AG04450 (cell line): ENCODE measurements at regions of chr14 and their contacts with region 1.

Region 1: DNA sequence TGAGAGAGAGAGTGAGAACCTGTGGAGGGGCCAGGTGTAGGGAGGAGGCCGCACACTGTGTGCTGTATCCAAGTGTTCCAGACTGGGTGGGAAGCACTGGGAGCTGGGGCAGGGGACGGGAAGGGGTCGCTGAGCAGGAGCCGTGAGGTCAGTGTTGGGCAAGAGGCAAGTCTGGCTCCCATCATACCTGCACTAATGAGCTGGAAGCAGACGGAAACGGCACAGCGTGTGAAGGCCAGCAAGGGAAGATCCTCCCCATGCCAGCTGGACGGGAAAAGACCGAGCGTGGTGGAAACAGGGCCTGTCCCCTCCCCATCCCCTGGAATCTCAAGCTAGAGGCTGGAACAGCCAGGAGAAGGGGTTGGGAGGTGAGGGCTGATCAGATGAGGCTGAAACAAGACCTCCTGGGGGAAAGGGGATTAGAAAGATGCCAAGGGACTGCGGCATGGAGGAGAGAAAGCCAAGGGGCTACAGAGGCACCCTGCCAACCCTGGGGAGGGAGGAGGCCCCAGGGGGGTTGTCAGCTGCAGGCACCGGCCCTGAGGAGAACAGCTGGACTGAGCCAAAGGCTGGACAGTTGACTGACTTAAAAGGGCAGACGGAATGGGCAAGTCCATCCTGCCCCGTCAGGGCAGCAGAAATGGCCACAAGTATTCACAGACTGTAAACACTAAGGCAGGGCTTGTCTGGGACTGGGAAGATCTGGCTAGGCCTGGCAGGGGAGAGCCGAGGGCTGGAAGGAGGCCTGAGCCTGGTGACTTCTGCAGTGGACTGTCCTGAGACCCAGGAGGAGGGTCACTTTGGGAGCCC is 19.0 kb upstream of the LTBP2 start:
- DNase-seq: no peak
- H3K4me3 ChIP-seq: no peak overlapping the region
- H3K27ac ChIP-seq: peak overlapping the region; percentile 21
- H3K27me3 ChIP-seq: no peaks in the 10 kb centered on the region
- CTCF ChIP-seq: no peak

Region 2: DNA sequence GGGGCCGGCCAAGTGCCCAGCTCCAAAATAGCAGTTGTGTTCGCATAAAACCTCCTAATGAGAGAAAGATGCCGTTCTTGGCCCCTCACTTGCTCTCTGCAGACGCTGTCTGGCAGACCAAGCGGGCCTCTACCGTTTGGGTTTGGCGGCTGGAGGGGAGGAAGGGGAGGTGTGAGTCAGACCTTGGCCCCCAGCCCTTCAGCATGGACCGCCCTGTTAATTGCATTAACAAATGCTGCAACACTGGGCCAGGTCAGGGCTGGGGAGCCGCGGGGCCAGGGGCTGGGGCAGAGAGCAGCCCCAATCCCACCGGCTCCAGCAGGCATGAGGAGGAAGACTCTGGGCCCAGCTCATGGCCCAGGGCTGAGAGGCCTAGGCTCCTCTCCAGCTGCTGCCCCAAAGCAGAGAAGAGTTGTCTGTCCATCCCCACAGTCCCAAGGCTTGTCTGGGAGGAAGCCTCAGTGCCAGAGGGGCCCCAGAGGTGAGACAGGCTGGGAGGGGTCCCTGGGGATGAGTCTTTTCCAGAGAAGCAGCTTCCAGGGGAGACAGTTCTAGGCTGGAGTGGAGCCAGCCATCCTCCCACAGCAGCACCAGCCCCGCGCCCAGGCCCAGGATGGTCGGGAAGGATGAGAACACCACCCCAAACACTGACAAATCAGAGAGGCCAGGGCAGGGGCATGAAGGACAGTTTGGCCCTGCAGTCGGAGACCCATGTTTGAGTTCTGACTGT is 35.9 kb before region 1 on chr14:
- CTCF ChIA-PET with region 1: no interaction called
- POLR2A ChIA-PET with region 1: interaction called, 12 read pairs
- DNase-seq: no peak
- H3K4me3 ChIP-seq: no peak overlapping the region
- H3K27ac ChIP-seq: peak overlapping the region; percentile 90
- H3K27me3 ChIP-seq: no peaks in the 10 kb centered on the region
- CTCF ChIP-seq: no peak

Region 3: GRCh38 chr14:74747237-74747636 is 116.2 kb after region 1 on chr14:
- CTCF ChIA-PET with region 1: no interaction called
- POLR2A ChIA-PET with region 1: no interaction called
- DNase-seq: no peak
- H3K4me3 ChIP-seq: no peak overlapping the region
- H3K27ac ChIP-seq: no peak overlapping the region
- H3K27me3 ChIP-seq: no peaks in the 10 kb centered on the region
- CTCF ChIP-seq: no peak